Mammary epithelial cell (primary cell): ENCODE measurements at regions of chr10 and their contacts with region 1.

Region 1: DNA sequence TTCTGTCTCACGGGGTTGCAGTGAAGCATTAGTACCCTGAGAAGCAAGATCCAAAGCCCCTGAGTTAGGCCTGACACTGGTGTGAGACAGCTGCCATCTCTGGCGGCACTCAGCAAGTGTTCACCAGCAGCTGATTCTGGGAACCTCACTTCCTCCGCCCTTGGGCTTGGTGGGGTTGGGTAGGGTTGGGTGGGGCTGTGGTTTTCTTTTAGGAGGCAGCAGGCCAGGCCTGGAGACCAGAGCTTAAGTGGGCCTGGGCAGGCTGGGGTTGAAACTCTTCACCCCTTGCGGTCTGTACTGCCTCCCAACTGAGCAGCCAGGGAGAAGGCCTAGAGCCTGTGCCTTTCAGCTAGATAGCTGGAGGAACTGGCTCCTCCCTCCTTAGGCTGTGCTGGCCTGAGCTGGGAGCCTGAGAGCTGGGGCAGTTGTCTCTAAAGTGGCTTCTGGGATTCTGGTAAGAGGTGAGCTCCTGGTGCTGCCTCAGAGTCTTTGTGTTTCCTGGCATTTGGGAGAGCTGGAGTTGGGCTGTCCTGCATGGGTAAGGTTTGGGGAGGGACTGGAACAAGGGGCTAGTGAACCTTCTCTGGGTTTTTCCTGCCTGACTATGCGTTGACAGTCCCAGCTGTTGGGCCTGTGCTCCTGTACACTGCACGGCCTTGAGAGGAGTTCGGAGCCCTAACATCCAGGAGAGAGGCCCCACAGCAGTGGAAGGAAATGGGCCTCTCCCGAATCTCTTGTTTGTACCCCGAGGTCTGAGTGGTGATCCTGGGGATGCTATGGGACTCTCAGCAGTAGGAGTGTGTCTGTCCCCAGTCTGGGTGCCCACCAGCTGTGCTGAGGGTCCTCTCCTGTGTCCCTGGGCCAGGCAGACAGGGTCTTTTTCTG is 5.2 kb downstream of the TSPAN14 start:
- DNase-seq: peak; percentile 93
- H3K4me3 ChIP-seq: peak overlapping the region in 2 of 3 experiments; percentile 10 to 27
- H3K27ac ChIP-seq: peak overlapping the region; percentile 59
- H3K4me1 ChIP-seq: peaks cover 81% of the 10 kb centered on the region
- H3K27me3 ChIP-seq: no peaks in the 10 kb centered on the region
- CTCF ChIP-seq: peak in 1 of 2 donors; percentile 8

Region 2: DNA sequence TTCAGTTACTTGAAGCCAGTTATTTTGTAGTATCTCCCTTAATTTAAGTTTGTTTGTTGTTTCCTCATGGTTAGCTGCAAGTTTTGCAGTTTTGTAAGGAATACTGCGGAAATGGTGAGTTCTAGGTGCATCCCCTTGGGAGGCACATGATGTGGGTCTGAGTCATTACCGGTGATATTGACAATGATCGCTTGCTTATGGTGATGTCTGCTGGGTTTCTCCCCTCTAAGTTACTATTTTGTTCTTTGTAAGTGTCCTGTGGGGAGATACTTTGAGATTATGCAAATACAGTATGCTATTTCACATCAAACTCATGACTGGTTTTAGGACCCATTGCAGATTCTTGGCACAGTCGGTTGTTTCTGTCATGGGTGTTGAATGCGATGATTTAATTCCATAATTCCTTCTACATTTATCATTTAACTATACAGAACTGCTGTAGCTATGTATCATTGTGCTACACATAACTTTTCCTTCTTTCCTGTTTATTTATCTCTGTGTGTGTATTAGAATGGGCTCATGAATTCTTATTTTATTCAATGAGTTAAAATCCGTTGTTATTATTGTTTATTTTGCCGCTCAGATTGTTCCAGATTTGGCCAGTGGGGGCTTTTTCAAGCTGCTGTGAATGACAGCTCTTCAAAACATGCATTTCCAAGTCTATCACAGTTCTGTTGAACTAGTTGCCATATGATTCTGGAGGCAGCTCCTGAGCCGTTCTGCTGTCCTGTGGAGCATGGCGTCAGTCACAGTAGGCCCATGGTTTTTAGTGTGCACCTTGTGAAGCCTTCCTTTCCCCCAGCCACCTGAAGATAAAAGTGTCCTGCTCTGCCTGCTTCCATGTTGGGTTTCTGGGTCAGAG is 13.2 kb after region 1 on chr10:
- CTCF ChIA-PET with region 1: interaction called, 3 read pairs
- dilution Hi-C with region 1: no loop called
- in situ Hi-C with region 1: no loop called
- intact Hi-C with region 1: loop called (anchors 1 kb)
- DNase-seq: peak; percentile 97
- H3K4me3 ChIP-seq: no peak overlapping the region
- H3K27ac ChIP-seq: peak overlapping the region; percentile 92
- H3K4me1 ChIP-seq: peaks cover 70% of the 10 kb centered on the region
- H3K27me3 ChIP-seq: no peaks in the 10 kb centered on the region
- CTCF ChIP-seq: no peak

Region 3: DNA sequence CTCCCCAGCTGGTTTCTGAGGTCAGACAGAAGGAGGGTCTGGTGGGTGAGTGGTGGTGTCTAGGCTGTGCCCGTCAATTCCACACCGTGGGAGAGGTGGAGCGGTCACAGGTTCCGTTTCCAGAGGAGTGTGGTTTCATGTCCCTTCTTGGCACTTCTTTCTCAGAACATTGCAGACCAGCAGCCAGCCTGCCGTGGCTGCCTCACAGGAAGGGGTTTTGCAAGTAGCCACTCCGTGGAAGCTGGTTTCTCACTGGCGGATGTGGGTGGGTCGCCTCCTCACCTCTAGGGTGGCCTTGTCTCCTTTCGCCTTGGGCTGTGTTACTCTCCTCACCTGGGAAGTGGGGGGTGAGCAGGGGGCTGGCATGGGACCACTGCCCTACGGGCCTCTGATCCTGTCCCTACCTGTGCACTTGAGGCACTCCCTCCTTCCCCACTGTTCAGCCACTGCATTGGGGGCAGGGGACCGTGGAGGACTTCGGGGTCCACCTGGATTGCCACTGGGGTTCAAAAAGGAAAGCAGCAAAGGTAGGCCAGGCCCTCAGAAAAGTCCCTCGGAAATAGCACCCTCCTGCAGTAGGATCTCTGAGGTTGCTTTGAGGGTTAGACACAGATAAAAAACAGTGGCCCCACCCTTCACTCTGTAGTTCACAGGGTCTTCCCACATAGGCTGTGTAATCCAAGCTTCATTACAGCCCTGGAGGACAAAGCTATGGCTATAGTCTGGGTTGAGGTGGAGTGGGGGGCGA is 28.7 kb after region 1 on chr10:
- CTCF ChIA-PET with region 1: interaction called, 11 read pairs
- dilution Hi-C with region 1: no loop called
- in situ Hi-C with region 1: loop called in 1 of 2 experiments (anchors 5 kb)
- intact Hi-C with region 1: no loop called
- DNase-seq: no peak
- H3K4me3 ChIP-seq: no peak overlapping the region
- H3K27ac ChIP-seq: peak overlapping the region; percentile 3
- H3K4me1 ChIP-seq: peaks cover 37% of the 10 kb centered on the region
- H3K27me3 ChIP-seq: no peaks in the 10 kb centered on the region
- CTCF ChIP-seq: no peak

Region 4: GRCh38 chr10:80493522-80494051 is 34.3 kb after region 1 on chr10:
- CTCF ChIA-PET with region 1: no interaction called
- dilution Hi-C with region 1: no loop called
- in situ Hi-C with region 1: loop called (anchors 5 kb)
- intact Hi-C with region 1: no loop called
- DNase-seq: no peak
- H3K4me3 ChIP-seq: no peak overlapping the region
- H3K27ac ChIP-seq: no peak overlapping the region
- H3K4me1 ChIP-seq: peaks cover 49% of the 10 kb centered on the region
- H3K27me3 ChIP-seq: no peaks in the 10 kb centered on the region
- CTCF ChIP-seq: no peak

Region 5: GRCh38 chr10:80498833-80499741 is 39.8 kb after region 1 on chr10:
- CTCF ChIA-PET with region 1: no interaction called
- dilution Hi-C with region 1: no loop called
- in situ Hi-C with region 1: loop called (anchors 5 kb)
- intact Hi-C with region 1: no loop called
- DNase-seq: peak; percentile 94
- H3K4me3 ChIP-seq: no peak overlapping the region
- H3K27ac ChIP-seq: peak overlapping the region; percentile 73
- H3K4me1 ChIP-seq: peaks cover 89% of the 10 kb centered on the region
- H3K27me3 ChIP-seq: no peaks in the 10 kb centered on the region
- CTCF ChIP-seq: peak in 1 of 2 donors; percentile 35